ENCODE measurements at regions of chr20 and their contacts with region 1.

Region 1: GRCh38 chr20:14595051-14595450 is 257.6 kb upstream of the FLRT3 start:
- DNase-seq: no peak
- H3K4me3 ChIP-seq: no peak overlapping the region
- H3K27ac ChIP-seq: no peak overlapping the region
- H3K4me1 ChIP-seq: no peaks in the 10 kb centered on the region
- H3K27me3 ChIP-seq: no peaks in the 10 kb centered on the region
- CTCF ChIP-seq: no peak

Region 2: GRCh38 chr20:13581452-13581851 is 1013.6 kb before region 1 on chr20:
- CTCF ChIA-PET with region 1: no interaction called
- POLR2A ChIA-PET with region 1: interaction called, 11 read pairs
- intact Hi-C with region 1: no loop called
- DNase-seq: no peak
- H3K4me3 ChIP-seq: no peak overlapping the region
- H3K27ac ChIP-seq: no peak overlapping the region
- H3K4me1 ChIP-seq: no peaks in the 10 kb centered on the region
- H3K27me3 ChIP-seq: no peaks in the 10 kb centered on the region
- CTCF ChIP-seq: no peak